Posterior vena cava (tissue), 2 donors: ENCODE measurements at regions of chr4 and their contacts with region 1.

Region 1: GRCh38 chr4:22668301-22668700 is 24.4 kb upstream of the GBA3 start:
- DNase-seq: no peak

Region 2: GRCh38 chr4:22614114-22614513 is 54.2 kb before region 1 on chr4:
- intact Hi-C with region 1: loop called in 1 of 2 experiments (anchors 10 kb)
- DNase-seq: no peak